Spleen (tissue), 13 donors: ENCODE measurements at regions of chr4 and their contacts with region 1.

Region 1: DNA sequence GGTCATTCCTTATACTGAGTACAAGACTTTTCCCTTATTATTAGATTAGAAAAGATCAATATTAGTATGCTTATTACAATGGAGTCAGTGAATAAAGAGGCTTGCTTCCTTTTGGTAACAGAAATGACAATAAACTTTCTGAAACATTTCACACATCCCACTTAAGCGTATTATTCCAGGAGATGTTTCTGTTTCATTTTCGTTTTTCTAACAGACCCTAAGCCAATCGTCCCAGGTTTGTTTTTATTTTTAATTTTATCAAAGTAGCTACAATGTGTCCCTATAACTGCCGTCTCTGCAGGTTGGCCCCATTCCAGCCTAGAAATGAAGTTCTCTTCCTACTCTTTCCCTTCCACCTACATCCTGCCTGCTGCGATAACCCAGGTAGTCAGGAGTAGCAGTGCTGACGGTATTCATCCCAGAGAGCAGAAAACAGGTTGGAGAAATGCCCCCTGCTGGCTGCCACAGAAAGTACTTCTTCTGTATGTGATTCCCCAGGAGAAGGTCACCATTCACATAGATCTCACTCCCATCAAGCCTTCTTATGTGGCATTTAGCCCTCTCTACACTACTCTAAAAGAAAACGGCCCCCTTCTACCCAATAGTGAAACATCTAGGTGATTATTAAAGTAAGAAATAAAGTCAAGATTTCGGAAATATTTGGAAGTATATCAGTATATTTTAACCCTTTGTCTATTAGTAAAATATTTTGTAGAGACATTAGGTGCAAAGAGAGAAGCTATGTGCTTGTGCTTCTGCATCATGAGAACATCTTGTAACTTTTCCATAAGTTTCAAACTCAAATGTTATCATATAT is 40.4 kb downstream of the ENPEP start:
- DNase-seq: peak; percentile 82
- H3K4me3 ChIP-seq: peak overlapping the region; percentile 29 to 73 (median 45)
- H3K27ac ChIP-seq: peak overlapping the region; percentile 4 to 83 (median 75)
- H3K4me1 ChIP-seq: peaks cover 0 to 21% (median 10%) of the 10 kb centered on the region in 6 donors
- H3K27me3 ChIP-seq: peaks cover 0 to 3% (median 0%) of the 10 kb centered on the region in 7 donors
- CTCF ChIP-seq: peak; percentile 39 to 82 (median 78)
- POLR2A ChIP-seq: no peak

Region 2: DNA sequence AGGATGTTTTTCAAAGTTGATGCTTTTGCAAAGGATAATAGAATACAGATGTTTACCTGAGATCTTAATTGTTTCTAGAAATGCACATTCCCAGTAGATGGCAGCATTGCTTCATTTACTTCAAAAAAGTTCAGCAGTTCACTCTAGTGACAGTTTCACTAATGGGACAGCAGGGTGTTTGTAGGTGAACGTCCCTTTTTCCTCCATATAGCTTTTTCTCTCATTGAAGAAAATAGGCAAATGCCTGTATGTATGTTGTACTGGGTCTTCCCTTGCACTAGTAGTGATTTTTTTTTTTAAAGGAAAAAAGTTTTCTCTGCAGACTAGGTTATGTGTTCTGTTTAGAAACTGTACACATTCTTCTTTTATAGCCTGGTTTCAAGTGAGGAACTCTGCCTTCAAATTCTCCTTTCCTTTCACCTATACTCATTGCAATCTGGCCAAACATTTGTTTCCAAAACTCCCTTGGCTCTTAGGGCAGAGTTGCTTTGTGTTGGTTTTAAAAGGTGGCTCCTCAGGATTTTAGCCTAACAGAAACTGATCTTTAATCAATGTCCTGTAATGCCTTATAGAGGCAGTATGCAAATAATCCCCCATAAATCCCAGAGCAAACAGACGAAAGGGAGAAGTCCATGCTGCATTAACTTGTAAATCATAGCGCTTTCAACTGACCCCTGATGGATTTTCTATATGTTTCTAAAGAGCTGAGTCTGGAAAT is 517.3 kb before region 1 on chr4:
- intact Hi-C with region 1: loop called (anchors 5 kb)
- DNase-seq: no peak
- H3K4me3 ChIP-seq: no peak overlapping the region
- H3K27ac ChIP-seq: no peak overlapping the region
- H3K4me1 ChIP-seq: peaks cover 0 to 13% (median 3%) of the 10 kb centered on the region in 6 donors
- H3K27me3 ChIP-seq: peaks cover 0 to 33% (median 0%) of the 10 kb centered on the region in 7 donors
- CTCF ChIP-seq: peak; percentile 43 to 74 (median 59)
- POLR2A ChIP-seq: no peak

Region 3: DNA sequence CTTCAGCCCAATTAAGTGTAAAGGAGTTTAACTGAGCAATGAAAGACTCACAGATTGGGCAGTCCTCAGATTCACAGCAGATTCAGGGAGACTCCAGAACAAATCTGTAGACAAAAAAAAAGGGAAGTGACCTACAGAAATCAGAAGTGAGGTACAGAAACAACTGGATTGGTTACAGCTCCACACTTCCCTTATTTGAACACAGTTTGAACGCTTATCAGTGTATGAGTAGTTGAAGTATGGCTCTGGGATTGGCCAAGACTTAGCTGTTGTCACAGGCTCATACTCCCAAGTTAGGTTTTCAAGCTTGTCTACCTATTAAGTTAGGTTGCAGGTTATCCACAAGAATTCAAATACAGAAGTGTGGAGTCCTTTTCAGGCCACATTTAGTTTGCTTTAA is 205.5 kb before region 1 on chr4:
- intact Hi-C with region 1: loop called (anchors 10 kb)
- DNase-seq: no peak
- H3K4me3 ChIP-seq: no peak overlapping the region
- H3K27ac ChIP-seq: no peak overlapping the region
- H3K4me1 ChIP-seq: no peaks in the 10 kb centered on the region
- H3K27me3 ChIP-seq: peaks cover 0 to 6% (median 0%) of the 10 kb centered on the region in 7 donors
- CTCF ChIP-seq: no peak
- POLR2A ChIP-seq: no peak